K562 (cell line): ENCODE measurements at regions of chr19 and their contacts with region 1.

Region 1: GRCh38 chr19:32287811-32288227 is 57.6 kb upstream of the ZNF507 start:
- DNase-seq: peak; percentile 21 to 78 (median 36)
- ATAC-seq: peak; percentile 96
- H3K4me3 ChIP-seq: no peak overlapping the region
- H3K27ac ChIP-seq: no peak overlapping the region
- H3K4me1 ChIP-seq: no peaks in the 10 kb centered on the region
- H3K27me3 ChIP-seq: peaks cover 4 to 38% of the 10 kb centered on the region in 2 experiments; a peak in 3 of 5 replicates
- CTCF ChIP-seq: peak; percentile 71 to 82 (median 78)
- EP300 ChIP-seq: no peak
- POLR2A ChIP-seq: no peak
- RAD21 ChIP-seq: peak; percentile 70 to 81

Region 2: DNA sequence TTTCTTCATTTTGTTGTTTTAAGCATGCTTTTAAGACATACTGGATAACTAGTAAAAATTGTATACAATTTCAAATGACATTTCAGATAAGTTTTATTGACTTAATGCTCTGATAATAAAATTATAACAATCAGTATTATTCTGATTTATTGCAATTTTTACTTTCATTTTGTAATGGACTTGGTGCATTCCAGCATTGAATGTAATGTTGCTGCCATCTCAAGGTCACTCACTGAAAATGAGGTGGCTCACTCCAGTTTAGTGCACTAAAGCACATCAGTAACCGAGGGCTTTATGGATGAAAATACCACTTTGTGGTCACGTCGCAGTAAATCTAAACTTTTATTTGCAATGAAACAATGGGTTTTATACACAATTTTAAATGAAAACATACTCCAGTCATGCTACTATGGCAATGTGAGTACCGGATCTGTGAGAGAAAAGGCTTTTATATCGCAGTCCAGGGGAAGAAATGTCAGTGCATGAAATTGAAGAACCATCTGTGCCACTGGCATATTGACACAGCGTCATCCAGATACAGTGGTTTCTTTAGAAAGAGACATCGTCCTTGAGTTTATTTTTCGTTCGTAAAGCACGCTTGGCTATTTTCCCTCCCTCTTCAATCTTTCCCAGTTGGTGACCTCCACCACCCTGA is 36.9 kb after region 1 on chr19:
- CTCF ChIA-PET with region 1: interaction called, 3 read pairs
- POLR2A ChIA-PET with region 1: no interaction called
- in situ Hi-C with region 1: no loop called
- intact Hi-C with region 1: loop called (anchors 5 kb)
- DNase-seq: no peak
- ATAC-seq: no peak
- H3K4me3 ChIP-seq: no peak overlapping the region
- H3K27ac ChIP-seq: no peak overlapping the region
- H3K4me1 ChIP-seq: no peaks in the 10 kb centered on the region; a peak in 1 of 5 replicates
- H3K27me3 ChIP-seq: peaks cover 31 to 47% of the 10 kb centered on the region in 2 experiments; a peak in 4 of 5 replicates
- CTCF ChIP-seq: peak in 1 of 3 experiments; percentile 33; a peak in 2 of 6 replicates
- EP300 ChIP-seq: no peak
- POLR2A ChIP-seq: no peak
- RAD21 ChIP-seq: peak in 1 of 2 experiments; percentile 31; a peak in 2 of 4 replicates

Region 3: DNA sequence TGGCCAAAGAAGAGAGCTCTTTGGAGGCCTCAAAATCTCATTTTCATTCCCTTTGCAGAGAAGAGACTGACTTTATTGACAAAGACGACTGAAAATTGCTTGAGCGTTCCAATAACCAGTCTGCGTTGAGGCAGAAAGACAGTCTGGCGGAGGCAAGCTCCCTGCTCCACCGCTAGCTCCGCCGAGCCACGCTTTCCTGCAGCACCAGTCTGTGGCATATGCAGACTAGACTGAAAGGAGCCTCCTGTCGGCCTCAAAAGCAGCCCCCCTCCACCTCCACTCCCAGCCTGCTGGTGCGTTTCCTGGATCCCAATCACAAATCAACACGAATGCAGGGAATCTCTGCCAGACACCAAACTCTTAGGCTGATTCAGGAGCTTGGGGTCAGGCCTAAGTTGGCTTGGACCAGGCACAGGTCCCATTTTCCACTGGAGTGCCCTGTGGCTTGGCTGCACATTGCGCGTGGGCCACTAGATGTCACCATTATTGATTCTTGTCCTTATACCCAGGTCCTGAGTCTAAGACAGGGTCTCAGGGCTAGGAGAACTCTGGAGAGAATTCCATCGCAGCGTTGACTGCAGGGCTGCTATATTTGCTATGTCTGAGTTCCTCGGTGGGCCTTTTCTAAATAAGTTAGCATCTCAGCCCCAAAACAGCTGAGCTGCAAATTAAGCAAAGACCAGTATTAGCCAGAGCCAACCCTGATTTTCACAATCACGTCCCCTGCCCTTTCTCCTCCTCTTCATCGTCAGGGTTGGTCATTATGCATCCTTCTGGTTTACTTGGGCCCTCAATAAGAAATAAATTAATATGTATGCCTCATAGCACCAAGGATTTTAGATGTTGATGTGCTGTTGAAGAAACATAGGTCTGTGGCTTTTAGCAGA is 52.4 kb after region 1 on chr19:
- CTCF ChIA-PET with region 1: no interaction called
- POLR2A ChIA-PET with region 1: no interaction called
- in situ Hi-C with region 1: no loop called
- intact Hi-C with region 1: loop called (anchors 5 kb)
- DNase-seq: peak; percentile 44 to 65 (median 55)
- ATAC-seq: peak; percentile 93
- H3K4me3 ChIP-seq: no peak overlapping the region
- H3K27ac ChIP-seq: no peak overlapping the region
- H3K4me1 ChIP-seq: peaks cover 0 to 5% of the 10 kb centered on the region in 2 experiments; a peak in 3 of 5 replicates
- H3K27me3 ChIP-seq: peaks cover 0 to 2% of the 10 kb centered on the region in 2 experiments; a peak in 1 of 5 replicates
- CTCF ChIP-seq: peak; percentile 64 to 84 (median 72)
- EP300 ChIP-seq: no peak
- POLR2A ChIP-seq: no peak
- RAD21 ChIP-seq: peak; percentile 36 to 70

Region 4: GRCh38 chr19:32405431-32406161 is 117.8 kb after region 1 on chr19 and contains the start of gene DPY19L3:
- CTCF ChIA-PET with region 1: no interaction called
- POLR2A ChIA-PET with region 1: no interaction called
- in situ Hi-C with region 1: no loop called
- intact Hi-C with region 1: no loop called
- DNase-seq: peak; percentile 96 to 99 (median 98)
- ATAC-seq: peak; percentile 96
- H3K4me3 ChIP-seq: peak within 1 kb of the TSS; percentile 74
- H3K27ac ChIP-seq: peak within 1 kb of the TSS; percentile 96
- H3K4me1 ChIP-seq: peaks cover 18 to 21% of the 10 kb centered on the region in 2 experiments
- H3K27me3 ChIP-seq: no peaks in the 10 kb centered on the region
- CTCF ChIP-seq: no peak
- EP300 ChIP-seq: 0 out of 2 replicates have a peak, but pooled peaks have one; percentile 13
- POLR2A ChIP-seq: peak; percentile 93
- RAD21 ChIP-seq: no peak
- polyA plus RNA-seq, gene DPY19L3: 4.7 to 6.0 TPM